Activated naive CD4-positive, alpha-beta T cell treated with anti-CD3 and anti-CD28 coated beads for 36 hours (primary cell): ENCODE measurements at regions of chr2 and their contacts with region 1.

Region 1: DNA sequence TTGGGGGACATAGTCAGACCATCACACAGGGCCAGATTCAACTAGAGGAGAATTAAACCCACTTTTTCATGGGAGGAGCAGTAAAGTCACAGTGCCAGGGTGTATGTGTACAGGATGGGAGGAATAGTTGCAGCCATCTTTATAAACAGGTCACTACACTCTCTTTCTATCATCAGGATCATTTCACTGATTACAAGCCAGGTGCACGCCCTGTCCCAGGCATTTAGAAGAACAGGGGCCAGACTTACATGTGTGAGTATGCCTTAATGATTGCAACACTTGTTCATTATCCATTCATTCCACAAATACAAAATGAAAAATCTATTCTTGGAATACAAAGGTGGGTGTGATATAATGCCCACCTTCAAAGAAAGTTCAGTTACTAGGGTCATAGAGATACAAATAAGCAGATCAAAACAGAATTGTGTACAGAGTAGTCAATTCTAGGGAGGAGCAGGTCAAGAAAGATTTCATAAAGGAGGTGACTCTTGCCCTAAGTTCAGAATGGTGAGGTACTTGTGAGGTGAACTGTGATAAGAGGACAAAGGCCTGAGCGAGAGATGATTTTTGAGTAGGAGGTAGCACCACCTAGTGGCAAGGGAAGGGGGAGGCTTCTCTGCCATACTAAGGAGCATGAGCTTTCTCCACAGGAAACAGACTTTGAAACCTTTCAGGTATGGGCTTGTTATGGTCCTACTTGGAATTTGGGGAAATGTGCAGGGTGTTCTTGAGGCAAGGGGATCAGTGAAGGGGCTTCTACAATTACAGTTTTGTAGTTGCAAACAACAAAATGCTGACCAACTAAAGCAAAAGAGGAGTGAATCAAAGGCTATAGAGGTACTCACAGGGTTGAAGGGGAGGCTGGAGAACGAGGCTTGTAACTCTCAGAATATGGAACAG is 156.3 kb downstream of the SUCLG1 start:
- DNase-seq: peak; percentile 65
- H3K4me3 Mint-ChIP-seq: no peak overlapping the region
- H3K27ac Mint-ChIP-seq: no peak overlapping the region
- H3K4me1 Mint-ChIP-seq: no peaks in the 10 kb centered on the region
- H3K27me3 Mint-ChIP-seq: peaks cover 5% of the 10 kb centered on the region

Region 2: GRCh38 chr2:83602753-83603152 is 700.0 kb before region 1 on chr2:
- CTCF ChIA-PET with region 1: no interaction called
- intact Hi-C with region 1: no loop called
- DNase-seq: no peak
- H3K4me3 Mint-ChIP-seq: no peak overlapping the region
- H3K27ac Mint-ChIP-seq: no peak overlapping the region
- H3K4me1 Mint-ChIP-seq: no peaks in the 10 kb centered on the region
- H3K27me3 Mint-ChIP-seq: no peaks in the 10 kb centered on the region

Region 3: DNA sequence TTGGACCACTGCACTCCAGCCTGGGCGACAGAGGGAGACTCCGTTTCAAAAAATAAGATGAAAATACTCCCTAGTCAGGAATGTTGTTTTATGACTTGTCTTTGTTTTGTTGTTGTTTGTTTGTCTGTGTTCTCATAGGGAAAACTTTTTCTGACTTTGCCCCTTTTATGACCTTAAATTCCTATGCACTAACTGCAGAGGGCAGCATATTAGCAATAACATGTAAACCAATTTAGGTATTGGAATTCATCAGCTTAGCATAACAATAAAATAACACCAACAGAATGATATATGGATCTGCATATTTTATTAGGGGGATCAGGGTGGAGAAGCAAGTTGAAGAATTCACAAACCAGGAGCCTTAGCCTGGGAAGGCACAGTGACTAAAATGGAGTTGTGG is 475.1 kb before region 1 on chr2:
- CTCF ChIA-PET with region 1: no interaction called
- intact Hi-C with region 1: loop called (anchors 10 kb)
- DNase-seq: no peak
- H3K4me3 Mint-ChIP-seq: no peak overlapping the region
- H3K27ac Mint-ChIP-seq: no peak overlapping the region
- H3K4me1 Mint-ChIP-seq: no peaks in the 10 kb centered on the region
- H3K27me3 Mint-ChIP-seq: peaks cover 8% of the 10 kb centered on the region

Region 4: GRCh38 chr2:83971547-83971946 is 331.2 kb before region 1 on chr2:
- CTCF ChIA-PET with region 1: no interaction called
- intact Hi-C with region 1: no loop called
- DNase-seq: no peak
- H3K4me3 Mint-ChIP-seq: no peak overlapping the region
- H3K27ac Mint-ChIP-seq: no peak overlapping the region
- H3K4me1 Mint-ChIP-seq: no peaks in the 10 kb centered on the region
- H3K27me3 Mint-ChIP-seq: peaks cover 19% of the 10 kb centered on the region

Region 5: DNA sequence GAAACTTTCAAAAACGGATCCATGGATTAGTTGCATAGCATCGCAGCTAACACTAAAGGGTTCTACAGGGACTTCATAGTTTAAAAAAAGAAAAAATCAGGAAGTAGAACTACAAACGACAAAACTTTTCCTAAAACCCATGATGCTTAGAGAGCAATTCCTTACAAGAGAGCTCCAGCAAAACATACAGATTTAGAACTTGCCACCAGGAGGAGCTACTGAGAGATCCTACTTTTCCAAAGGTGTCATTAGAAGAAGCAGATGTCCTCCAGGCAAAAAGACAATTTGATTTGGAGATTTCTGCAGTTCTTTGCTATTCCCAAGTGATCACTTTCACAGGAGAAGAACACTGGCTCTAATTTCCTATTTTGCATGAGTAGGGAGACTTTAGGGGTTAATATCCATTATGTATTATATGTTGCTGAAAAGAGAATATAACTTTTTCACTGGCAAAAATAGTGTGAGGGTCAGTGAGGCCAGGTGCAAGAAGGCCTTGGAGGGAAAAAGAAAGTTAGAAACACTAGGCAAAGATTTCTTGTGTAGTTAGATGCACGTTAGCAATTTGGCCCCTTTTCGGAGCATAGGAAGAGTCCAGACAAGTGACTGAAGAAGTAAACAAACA is 279.8 kb before region 1 on chr2:
- CTCF ChIA-PET with region 1: interaction called, 3 read pairs
- intact Hi-C with region 1: loop called (anchors 1 kb)
- DNase-seq: peak; percentile 18
- H3K4me3 Mint-ChIP-seq: no peak overlapping the region
- H3K27ac Mint-ChIP-seq: no peak overlapping the region
- H3K4me1 Mint-ChIP-seq: no peaks in the 10 kb centered on the region
- H3K27me3 Mint-ChIP-seq: no peaks in the 10 kb centered on the region

Region 6: DNA sequence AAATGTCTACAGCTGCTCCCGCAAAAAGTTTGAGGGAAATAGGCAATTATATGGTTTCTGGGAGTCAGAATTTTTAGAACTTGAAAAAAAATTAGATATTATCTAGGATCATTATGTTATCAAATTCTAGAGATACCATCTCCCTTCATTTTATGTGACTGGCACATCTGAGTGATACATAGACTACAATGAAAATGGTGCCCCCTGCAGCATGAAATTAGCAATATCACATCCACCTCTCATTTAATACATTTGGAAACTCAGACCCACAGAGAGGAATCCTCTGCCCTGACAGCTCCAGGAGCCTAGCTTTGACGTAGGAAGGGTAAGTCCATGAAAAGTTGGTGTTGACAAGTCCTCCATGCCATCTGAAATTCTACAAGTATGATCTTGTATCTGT is 225.3 kb before region 1 on chr2:
- CTCF ChIA-PET with region 1: no interaction called
- intact Hi-C with region 1: loop called (anchors 2 kb)
- DNase-seq: peak; percentile 39
- H3K4me3 Mint-ChIP-seq: no peak overlapping the region
- H3K27ac Mint-ChIP-seq: no peak overlapping the region
- H3K4me1 Mint-ChIP-seq: no peaks in the 10 kb centered on the region
- H3K27me3 Mint-ChIP-seq: peaks cover 2% of the 10 kb centered on the region

Region 7: DNA sequence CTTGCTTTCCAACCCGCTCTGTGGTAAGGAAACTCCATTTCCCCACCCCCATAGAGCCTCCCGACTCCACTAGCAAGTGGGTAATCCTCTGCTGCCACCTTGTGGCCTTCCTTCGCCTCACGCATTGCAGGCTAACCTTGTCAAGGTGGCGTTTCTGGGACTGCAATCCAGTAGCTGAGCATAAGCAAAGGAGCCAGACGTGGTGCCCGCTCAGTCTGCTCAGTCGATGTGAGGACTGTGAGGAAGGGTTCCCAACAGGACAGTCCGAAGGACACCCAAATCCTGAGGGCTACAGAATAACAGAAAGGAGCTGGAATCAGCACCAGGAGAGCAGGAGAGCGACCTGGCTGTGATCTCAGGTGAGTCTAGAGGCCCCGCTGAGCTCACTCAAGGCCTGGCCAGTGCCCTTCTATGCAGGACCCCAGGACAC is 12.2 kb after region 1 on chr2:
- CTCF ChIA-PET with region 1: interaction called, 13 read pairs
- intact Hi-C with region 1: no loop called
- DNase-seq: peak; percentile 90
- H3K4me3 Mint-ChIP-seq: no peak overlapping the region
- H3K27ac Mint-ChIP-seq: no peak overlapping the region
- H3K4me1 Mint-ChIP-seq: peaks cover 4% of the 10 kb centered on the region
- H3K27me3 Mint-ChIP-seq: peaks cover 5% of the 10 kb centered on the region